ENCODE measurements at regions of chr6 and their contacts with region 1.

Region 1: DNA sequence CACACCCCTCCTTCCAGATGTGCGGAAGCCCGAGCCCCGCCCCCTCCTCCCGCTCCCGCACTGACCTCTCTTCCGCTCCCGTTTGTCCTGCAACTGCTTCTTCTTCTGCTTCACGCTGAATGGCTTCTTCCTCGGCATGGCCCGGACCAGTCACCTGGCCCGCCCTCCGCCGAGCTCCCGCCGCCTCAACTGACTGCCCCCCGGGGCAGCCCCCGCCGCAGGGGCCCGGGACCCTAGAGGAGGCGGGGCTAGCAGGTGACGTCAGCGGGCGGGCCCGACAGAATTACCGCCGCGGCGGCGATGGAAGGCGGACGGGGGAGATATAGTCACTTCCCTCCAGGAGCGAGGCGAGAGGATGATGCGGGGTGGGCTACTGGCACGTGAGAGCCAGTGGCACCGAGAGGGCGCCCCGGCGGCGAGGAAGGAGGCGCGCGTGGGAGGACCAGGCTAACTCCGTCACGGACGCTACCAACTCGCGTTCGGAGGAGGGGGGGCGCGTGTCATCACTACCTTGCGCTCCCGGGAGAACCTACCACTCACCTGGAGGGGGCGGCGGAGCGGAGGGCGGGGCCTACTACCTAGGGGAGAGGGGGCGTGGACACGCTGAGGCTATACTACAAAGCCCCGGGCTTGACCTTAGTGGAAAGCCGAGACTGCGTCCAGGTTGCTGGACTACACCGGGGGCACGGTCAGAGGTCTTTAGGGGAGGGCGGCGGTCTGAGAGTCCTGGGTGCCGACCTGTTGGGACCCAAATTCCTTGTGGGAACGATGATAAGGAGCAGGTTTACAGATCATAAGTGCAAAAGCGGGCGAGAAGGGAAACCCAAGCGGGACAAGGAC is at the start of gene GNL1:
- DNase-seq: peak; percentile 97 to 100 (median 99)
- ATAC-seq: peak; percentile 90
- H3K4me3 ChIP-seq: peak within 1 kb of the TSS; percentile 75 to 92
- H3K4me3 Mint-ChIP-seq: peak within 1 kb of the TSS; percentile 95
- H3K27ac ChIP-seq: peak within 1 kb of the TSS; percentile 98 to 99
- H3K27ac Mint-ChIP-seq: peak within 1 kb of the TSS; percentile 99
- H3K4me1 ChIP-seq: peaks cover 25% of the 10 kb centered on the region
- H3K4me1 Mint-ChIP-seq: peaks cover 42% of the 10 kb centered on the region
- H3K27me3 ChIP-seq: no peaks in the 10 kb centered on the region
- H3K27me3 Mint-ChIP-seq: no peaks in the 10 kb centered on the region
- CTCF ChIP-seq: no peak
- total RNA-seq, gene GNL1: 148 to 159 TPM

Region 2: DNA sequence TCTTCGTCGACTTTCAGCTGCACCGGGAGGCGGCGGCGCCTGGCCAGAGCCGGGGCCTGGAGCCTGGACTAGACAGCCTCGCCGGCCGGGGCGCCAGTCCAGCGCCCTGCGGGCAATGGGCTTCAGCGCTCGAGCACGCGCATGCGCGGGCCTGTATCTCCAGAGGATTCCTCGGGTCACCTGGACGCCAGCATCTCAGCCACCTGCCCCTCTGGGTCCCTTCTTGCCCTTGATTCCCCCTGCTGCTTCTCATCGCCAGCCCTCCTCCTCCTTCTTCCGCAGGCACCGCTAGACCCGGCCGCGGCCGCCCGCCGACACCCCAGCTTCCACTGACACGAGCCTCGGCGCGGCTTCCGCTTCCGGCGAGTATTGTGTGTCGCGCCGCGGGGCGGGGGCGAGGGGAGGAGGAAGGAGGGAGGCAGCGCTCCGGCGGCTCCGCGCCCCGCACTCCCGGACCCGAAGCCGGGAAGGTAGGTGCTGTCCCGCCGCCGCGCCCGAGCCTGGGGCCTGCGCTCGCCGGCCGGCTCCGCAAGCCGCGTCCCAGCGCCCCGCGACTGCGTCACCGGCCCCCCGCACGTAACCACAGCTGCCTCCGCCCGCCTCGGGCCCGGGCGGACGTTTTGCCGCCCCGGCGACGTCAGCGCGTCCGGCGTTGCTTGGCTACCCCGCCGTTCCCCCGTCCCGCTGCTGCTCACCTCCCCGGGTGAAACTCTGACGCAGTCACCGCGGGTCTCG is 229.6 kb before region 1 on chr6 and contains the start of gene TRIM39:
- CTCF ChIA-PET with region 1: no interaction called
- POLR2A ChIA-PET with region 1: no interaction called
- intact Hi-C with region 1: loop called (anchors 5 kb)
- DNase-seq: peak; percentile 75 to 97 (median 90)
- ATAC-seq: peak; percentile 58
- H3K4me3 ChIP-seq: peak within 1 kb of the TSS; percentile 74 to 87
- H3K4me3 Mint-ChIP-seq: peak within 1 kb of the TSS; percentile 96
- H3K27ac ChIP-seq: peak within 1 kb of the TSS; percentile 95 to 99
- H3K27ac Mint-ChIP-seq: peak within 1 kb of the TSS; percentile 98
- H3K4me1 ChIP-seq: peaks cover 41% of the 10 kb centered on the region
- H3K4me1 Mint-ChIP-seq: peaks cover 59% of the 10 kb centered on the region
- H3K27me3 ChIP-seq: no peaks in the 10 kb centered on the region
- H3K27me3 Mint-ChIP-seq: no peaks in the 10 kb centered on the region
- CTCF ChIP-seq: no peak
- total RNA-seq, gene TRIM39: 50.7 to 58.5 TPM

Region 3: DNA sequence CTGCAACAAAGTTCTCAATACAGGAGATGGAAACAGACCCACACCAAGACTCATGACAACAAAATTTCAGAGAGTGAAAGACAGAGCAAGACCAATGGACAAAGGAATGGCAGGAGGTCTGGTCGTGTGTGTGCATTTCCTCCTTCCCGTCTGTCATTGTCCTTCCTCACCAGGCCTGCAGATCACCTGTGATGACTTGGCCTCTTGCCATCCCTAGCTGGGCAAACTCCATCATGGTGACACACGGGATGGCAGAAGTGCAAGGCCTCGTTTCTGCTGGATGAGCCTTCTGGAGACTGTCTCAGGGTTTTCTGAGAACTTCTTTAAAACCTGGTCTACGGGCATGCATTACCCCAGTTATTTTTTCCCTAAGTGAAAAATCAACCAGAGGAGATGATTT is 162.1 kb before region 1 on chr6:
- CTCF ChIA-PET with region 1: no interaction called
- POLR2A ChIA-PET with region 1: no interaction called
- intact Hi-C with region 1: no loop called
- DNase-seq: no peak
- ATAC-seq: no peak
- H3K4me3 ChIP-seq: no peak overlapping the region
- H3K4me3 Mint-ChIP-seq: no peak overlapping the region
- H3K27ac ChIP-seq: no peak overlapping the region
- H3K27ac Mint-ChIP-seq: no peak overlapping the region
- H3K4me1 ChIP-seq: peaks cover 4% of the 10 kb centered on the region
- H3K4me1 Mint-ChIP-seq: peaks cover 4% of the 10 kb centered on the region
- H3K27me3 ChIP-seq: peaks cover 0 to 10% of the 10 kb centered on the region in 2 experiments
- H3K27me3 Mint-ChIP-seq: peaks cover 43% of the 10 kb centered on the region
- CTCF ChIP-seq: no peak

Region 4: GRCh38 chr6:30571075-30571768 is 14.9 kb after region 1 on chr6 and contains the start of gene ABCF1:
- CTCF ChIA-PET with region 1: interaction called, 6 read pairs
- POLR2A ChIA-PET with region 1: interaction called, 32 read pairs
- intact Hi-C with region 1: loop called (anchors 1 kb)
- DNase-seq: peak; percentile 99 to 100 (median 100)
- ATAC-seq: peak; percentile 96
- H3K4me3 ChIP-seq: peak within 1 kb of the TSS; percentile 64 to 86
- H3K4me3 Mint-ChIP-seq: peak within 1 kb of the TSS; percentile 98
- H3K27ac ChIP-seq: peak within 1 kb of the TSS; percentile 90 to 98
- H3K27ac Mint-ChIP-seq: peak within 1 kb of the TSS; percentile 99
- H3K4me1 ChIP-seq: peaks cover 54% of the 10 kb centered on the region
- H3K4me1 Mint-ChIP-seq: peaks cover 69% of the 10 kb centered on the region
- H3K27me3 ChIP-seq: no peaks in the 10 kb centered on the region
- H3K27me3 Mint-ChIP-seq: no peaks in the 10 kb centered on the region
- CTCF ChIP-seq: no peak
- total RNA-seq, gene ABCF1: 121 to 130 TPM

Region 5: DNA sequence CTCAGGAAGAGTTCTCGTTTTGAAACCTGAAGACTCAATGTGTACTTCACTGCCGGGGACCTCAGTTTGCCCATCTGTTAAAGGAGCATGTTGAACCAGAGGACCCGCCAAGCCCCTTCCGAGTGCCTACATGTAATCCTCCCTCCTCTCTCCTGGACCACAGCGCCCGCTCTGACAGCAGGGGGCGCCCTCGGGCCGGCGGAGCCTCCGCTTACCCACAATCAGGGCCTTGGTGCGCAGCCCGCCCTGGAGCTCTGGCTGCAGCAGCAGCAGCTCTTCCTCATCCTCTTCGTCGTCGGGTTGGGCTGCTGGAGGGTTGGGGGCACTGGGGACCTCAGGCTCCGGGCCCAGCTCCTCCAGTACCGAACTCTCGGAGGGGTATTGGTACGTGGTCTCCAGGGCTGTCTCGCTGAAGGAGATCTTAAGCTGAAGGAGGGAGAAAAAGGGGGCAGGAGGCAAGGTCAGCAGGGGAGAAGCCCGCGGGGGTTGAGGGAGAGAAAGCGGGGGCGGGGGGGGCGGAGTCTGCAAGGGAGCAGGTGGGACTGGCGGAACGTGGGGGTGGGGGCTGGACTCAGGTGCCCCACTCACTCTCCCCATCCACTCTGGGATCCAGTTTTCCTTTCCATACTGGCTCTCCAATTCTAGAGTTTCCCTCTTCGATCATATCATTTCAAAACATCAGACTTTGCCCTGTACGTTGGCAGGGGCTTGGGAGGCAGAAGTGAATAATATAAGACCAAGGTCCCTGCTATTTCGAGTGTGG is 122.9 kb after region 1 on chr6:
- CTCF ChIA-PET with region 1: interaction called, 3 read pairs
- POLR2A ChIA-PET with region 1: no interaction called
- intact Hi-C with region 1: loop called in 1 of 2 experiments (anchors 2 kb)
- DNase-seq: peak; percentile 88 to 98 (median 92)
- ATAC-seq: peak; percentile 32
- H3K4me3 ChIP-seq: peak overlapping the region; percentile 86 to 95
- H3K4me3 Mint-ChIP-seq: peak overlapping the region; percentile 99
- H3K27ac ChIP-seq: peak overlapping the region; percentile 21 to 85
- H3K27ac Mint-ChIP-seq: peak overlapping the region; percentile 99
- H3K4me1 ChIP-seq: peaks cover 27% of the 10 kb centered on the region
- H3K4me1 Mint-ChIP-seq: peaks cover 38% of the 10 kb centered on the region
- H3K27me3 ChIP-seq: no peaks in the 10 kb centered on the region
- H3K27me3 Mint-ChIP-seq: no peaks in the 10 kb centered on the region
- CTCF ChIP-seq: peak; percentile 92

Region 6: GRCh38 chr6:30800871-30801270 is 244.6 kb after region 1 on chr6:
- CTCF ChIA-PET with region 1: no interaction called
- POLR2A ChIA-PET with region 1: no interaction called
- intact Hi-C with region 1: no loop called
- DNase-seq: no peak
- ATAC-seq: no peak
- H3K4me3 ChIP-seq: no peak overlapping the region
- H3K4me3 Mint-ChIP-seq: no peak overlapping the region
- H3K27ac ChIP-seq: no peak overlapping the region
- H3K27ac Mint-ChIP-seq: no peak overlapping the region
- H3K4me1 ChIP-seq: peaks cover 4% of the 10 kb centered on the region
- H3K4me1 Mint-ChIP-seq: peaks cover 20% of the 10 kb centered on the region
- H3K27me3 ChIP-seq: no peaks in the 10 kb centered on the region
- H3K27me3 Mint-ChIP-seq: no peaks in the 10 kb centered on the region
- CTCF ChIP-seq: no peak

Measured in CD8-positive, alpha-beta T cell (primary cell).